ENCODE measurements at regions of chr13 and their contacts with region 1.

Region 1: GRCh38 chr13:41352935-41353840 is 42.1 kb downstream of the NAA16 start:
- DNase-seq: peak; percentile 15 to 74 (median 66)
- ATAC-seq: peak; percentile 80
- H3K4me3 ChIP-seq: no peak overlapping the region
- H3K4me3 Mint-ChIP-seq: peak overlapping the region in 9 of 10 donors; percentile 19 to 80 (median 53)
- H3K27ac ChIP-seq: peak overlapping the region; percentile 68
- H3K27ac Mint-ChIP-seq: peak overlapping the region; percentile 73 to 96 (median 88)
- H3K4me1 ChIP-seq: peaks cover 34 to 52% of the 10 kb centered on the region in 2 donors
- H3K4me1 Mint-ChIP-seq: peaks cover 24 to 72% (median 59%) of the 10 kb centered on the region in 7 donors
- H3K27me3 ChIP-seq: no peaks in the 10 kb centered on the region
- H3K27me3 Mint-ChIP-seq: no peaks in the 10 kb centered on the region

Region 2: DNA sequence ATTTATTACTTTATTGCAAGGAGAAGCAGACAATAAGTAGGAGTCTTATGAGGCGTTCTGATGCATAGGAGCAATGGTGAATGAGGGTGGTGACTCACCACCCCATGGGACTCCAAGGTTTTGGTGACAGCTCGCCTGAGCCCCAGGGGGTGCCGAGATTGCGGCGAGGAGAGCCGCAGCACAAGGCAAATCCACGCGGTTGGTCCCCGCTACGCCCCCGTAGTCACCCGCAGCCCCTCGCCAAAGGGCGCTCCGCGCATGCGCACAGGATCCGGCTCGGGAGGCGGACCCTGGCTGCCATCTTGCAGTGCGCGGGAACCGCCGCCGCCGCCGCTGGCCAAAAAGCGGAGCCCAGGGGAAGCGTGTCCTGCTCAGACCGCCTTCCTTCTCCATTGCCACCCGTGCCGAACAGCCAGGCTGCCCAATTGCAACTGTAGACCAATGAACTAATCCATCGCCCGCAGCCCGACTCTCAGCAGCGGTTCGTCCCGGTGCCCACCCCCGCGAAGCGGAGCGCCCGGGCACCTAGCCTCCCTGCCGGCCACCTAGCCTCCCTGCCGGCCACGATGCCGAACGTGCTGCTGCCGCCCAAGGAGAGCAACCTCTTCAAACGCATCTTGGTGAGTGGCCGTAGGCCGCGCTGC is 42.1 kb before region 1 on chr13 and contains the start of gene NAA16:
- CTCF ChIA-PET with region 1: no interaction called
- POLR2A ChIA-PET with region 1: no interaction called
- intact Hi-C with region 1: loop called (anchors 2 kb)
- DNase-seq: peak; percentile 91 to 99 (median 94)
- ATAC-seq: peak; percentile 91
- H3K4me3 ChIP-seq: peak within 1 kb of the TSS; percentile 97
- H3K4me3 Mint-ChIP-seq: peak within 1 kb of the TSS; percentile 80 to 99 (median 98)
- H3K27ac ChIP-seq: peak within 1 kb of the TSS; percentile 91
- H3K27ac Mint-ChIP-seq: peak within 1 kb of the TSS; percentile 76 to 96 (median 95)
- H3K4me1 ChIP-seq: peaks cover 25 to 29% of the 10 kb centered on the region in 2 donors
- H3K4me1 Mint-ChIP-seq: peaks cover 14 to 55% (median 41%) of the 10 kb centered on the region in 7 donors
- H3K27me3 ChIP-seq: no peaks in the 10 kb centered on the region
- H3K27me3 Mint-ChIP-seq: no peaks in the 10 kb centered on the region
- total RNA-seq, gene NAA16: 30.6 to 99.6 (median 90.4) TPM

Region 3: DNA sequence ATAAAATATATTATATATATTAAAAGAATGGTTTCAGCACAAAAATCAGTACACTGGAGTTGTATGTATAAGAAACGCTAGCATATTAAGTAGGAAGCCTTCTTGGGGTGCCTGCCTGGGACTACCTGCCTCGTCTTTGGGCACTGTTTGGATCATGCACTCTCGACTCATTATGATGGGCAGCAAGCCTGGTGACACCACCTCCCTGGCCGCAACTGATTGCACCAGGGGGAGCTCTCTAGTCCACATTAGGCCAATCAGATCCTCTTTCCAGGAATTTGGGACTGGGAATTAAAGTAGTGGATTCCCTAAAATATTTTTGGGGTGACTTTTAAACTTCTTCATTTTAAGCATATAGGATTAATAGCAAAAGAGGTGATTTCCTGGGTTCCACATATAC is 48.2 kb after region 1 on chr13:
- CTCF ChIA-PET with region 1: no interaction called
- POLR2A ChIA-PET with region 1: no interaction called
- intact Hi-C with region 1: loop called in 1 of 2 experiments (anchors 2 kb)
- DNase-seq: no peak
- ATAC-seq: no peak
- H3K4me3 ChIP-seq: no peak overlapping the region
- H3K4me3 Mint-ChIP-seq: no peak overlapping the region
- H3K27ac ChIP-seq: no peak overlapping the region
- H3K27ac Mint-ChIP-seq: no peak overlapping the region
- H3K4me1 ChIP-seq: no peaks in the 10 kb centered on the region
- H3K4me1 Mint-ChIP-seq: peaks cover 0 to 2% (median 0%) of the 10 kb centered on the region in 7 donors
- H3K27me3 ChIP-seq: no peaks in the 10 kb centered on the region
- H3K27me3 Mint-ChIP-seq: peaks cover 0 to 4% (median 0%) of the 10 kb centered on the region in 5 donors

Region 4: GRCh38 chr13:41588899-41589298 is 235.7 kb after region 1 on chr13:
- CTCF ChIA-PET with region 1: interaction called, 3 read pairs
- POLR2A ChIA-PET with region 1: interaction called, 3 read pairs
- intact Hi-C with region 1: loop called in 1 of 2 experiments (anchors 1 kb)
- DNase-seq: peak in 1 of 9 donors; percentile 32
- ATAC-seq: peak; percentile 82
- H3K4me3 ChIP-seq: no peak overlapping the region
- H3K4me3 Mint-ChIP-seq: no peak overlapping the region
- H3K27ac ChIP-seq: no peak overlapping the region
- H3K27ac Mint-ChIP-seq: no peak overlapping the region
- H3K4me1 ChIP-seq: peaks cover 0 to 6% of the 10 kb centered on the region in 2 donors
- H3K4me1 Mint-ChIP-seq: peaks cover 0 to 10% (median 4%) of the 10 kb centered on the region in 7 donors
- H3K27me3 ChIP-seq: no peaks in the 10 kb centered on the region
- H3K27me3 Mint-ChIP-seq: no peaks in the 10 kb centered on the region

Region 5: DNA sequence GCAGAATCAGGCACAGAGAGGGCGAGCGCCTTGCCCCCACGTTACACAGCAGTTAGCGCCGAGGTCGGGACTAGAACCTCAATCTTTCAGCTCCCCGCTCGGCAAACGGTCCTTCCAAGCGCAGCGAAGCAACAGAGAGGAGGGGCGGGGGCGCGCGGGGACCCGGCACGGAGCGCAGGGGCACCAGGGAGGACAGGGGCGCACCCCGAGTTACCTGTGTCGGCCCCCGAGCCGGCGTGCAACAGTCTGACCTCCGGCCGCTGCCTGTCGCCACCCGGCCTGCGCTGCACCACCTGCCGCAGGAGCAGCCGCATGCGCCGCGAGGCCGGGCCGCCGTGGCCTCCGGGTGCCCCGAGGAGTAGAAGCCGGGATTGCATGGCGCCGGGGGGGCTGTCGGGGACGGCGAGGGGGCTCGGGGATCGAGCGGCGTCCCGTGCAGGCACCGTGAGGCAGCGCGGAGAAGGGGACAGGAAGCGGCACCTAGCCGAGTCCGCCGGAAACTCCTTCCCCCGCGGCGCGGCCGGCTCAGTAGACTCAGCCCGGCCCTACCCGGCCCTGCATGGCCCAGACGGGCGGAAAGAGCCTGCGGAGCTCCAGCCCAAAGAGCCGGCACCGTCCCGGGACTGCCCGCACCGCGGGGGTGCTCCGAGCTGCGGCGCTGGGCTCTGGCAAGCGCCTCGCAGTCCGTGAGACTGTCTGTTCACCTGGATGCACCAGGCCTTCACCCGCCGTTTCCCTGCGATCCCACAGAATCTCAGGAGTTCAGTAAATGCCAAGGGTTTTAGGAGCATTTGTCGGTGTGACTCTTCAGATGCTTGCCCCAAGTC is 607.7 kb after region 1 on chr13 and contains the start of gene VWA8:
- CTCF ChIA-PET with region 1: no interaction called
- POLR2A ChIA-PET with region 1: no interaction called
- intact Hi-C with region 1: loop called in 1 of 2 experiments (anchors 5 kb)
- DNase-seq: peak; percentile 75 to 86 (median 84)
- ATAC-seq: peak; percentile 97
- H3K4me3 ChIP-seq: peak within 1 kb of the TSS; percentile 86
- H3K4me3 Mint-ChIP-seq: peak within 1 kb of the TSS; percentile 92 to 97 (median 94)
- H3K27ac ChIP-seq: peak within 1 kb of the TSS; percentile 84
- H3K27ac Mint-ChIP-seq: peak within 1 kb of the TSS; percentile 88 to 99 (median 95)
- H3K4me1 ChIP-seq: peaks cover 14 to 16% of the 10 kb centered on the region in 2 donors
- H3K4me1 Mint-ChIP-seq: peaks cover 19 to 63% (median 43%) of the 10 kb centered on the region in 7 donors
- H3K27me3 ChIP-seq: no peaks in the 10 kb centered on the region
- H3K27me3 Mint-ChIP-seq: peaks cover 0 to 2% (median 0%) of the 10 kb centered on the region in 5 donors
- total RNA-seq, gene VWA8: 16.8 to 26.3 (median 21.8) TPM

Region 6: GRCh38 chr13:42110410-42111155 is 757.4 kb after region 1 on chr13:
- CTCF ChIA-PET with region 1: no interaction called
- POLR2A ChIA-PET with region 1: no interaction called
- intact Hi-C with region 1: loop called (anchors 1 kb)
- DNase-seq: peak in 7 of 9 donors; percentile 30 to 78 (median 65)
- ATAC-seq: peak; percentile 90
- H3K4me3 ChIP-seq: no peak overlapping the region
- H3K4me3 Mint-ChIP-seq: no peak overlapping the region
- H3K27ac ChIP-seq: no peak overlapping the region
- H3K27ac Mint-ChIP-seq: no peak overlapping the region
- H3K4me1 ChIP-seq: no peaks in the 10 kb centered on the region
- H3K4me1 Mint-ChIP-seq: peaks cover 4 to 9% (median 7%) of the 10 kb centered on the region in 7 donors
- H3K27me3 ChIP-seq: no peaks in the 10 kb centered on the region
- H3K27me3 Mint-ChIP-seq: no peaks in the 10 kb centered on the region

Region 7: DNA sequence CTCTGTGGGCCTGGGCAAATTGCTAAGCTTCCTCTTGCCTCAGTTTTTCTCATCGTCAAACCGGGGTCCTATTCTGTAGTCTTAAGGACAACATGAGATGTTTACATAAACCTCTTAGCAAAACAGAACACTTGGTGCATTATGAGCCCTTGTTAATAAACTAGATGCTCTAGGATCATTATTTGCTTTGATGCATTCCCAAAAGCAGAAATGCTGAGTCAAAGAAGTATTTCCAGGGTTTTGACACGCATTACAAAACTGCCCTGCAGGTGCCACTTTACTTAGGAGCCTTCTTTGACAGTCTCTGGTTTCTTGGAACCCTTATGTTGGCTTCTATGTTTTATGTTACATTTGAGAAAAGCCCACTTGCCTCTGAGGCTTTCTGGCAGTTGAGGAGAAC is 930.9 kb after region 1 on chr13:
- CTCF ChIA-PET with region 1: no interaction called
- POLR2A ChIA-PET with region 1: no interaction called
- intact Hi-C with region 1: no loop called
- DNase-seq: no peak
- ATAC-seq: no peak
- H3K4me3 ChIP-seq: no peak overlapping the region
- H3K4me3 Mint-ChIP-seq: peak overlapping the region in 2 of 10 donors; percentile 27 to 46
- H3K27ac ChIP-seq: no peak overlapping the region
- H3K27ac Mint-ChIP-seq: peak overlapping the region in 1 of 9 donors; percentile 32
- H3K4me1 ChIP-seq: peaks cover 1 to 6% of the 10 kb centered on the region in 2 donors
- H3K4me1 Mint-ChIP-seq: peaks cover 16 to 55% (median 50%) of the 10 kb centered on the region in 7 donors
- H3K27me3 ChIP-seq: no peaks in the 10 kb centered on the region
- H3K27me3 Mint-ChIP-seq: no peaks in the 10 kb centered on the region